RWPE1 (cell line): ENCODE measurements at regions of chr19 and their contacts with region 1.

Region 1: DNA sequence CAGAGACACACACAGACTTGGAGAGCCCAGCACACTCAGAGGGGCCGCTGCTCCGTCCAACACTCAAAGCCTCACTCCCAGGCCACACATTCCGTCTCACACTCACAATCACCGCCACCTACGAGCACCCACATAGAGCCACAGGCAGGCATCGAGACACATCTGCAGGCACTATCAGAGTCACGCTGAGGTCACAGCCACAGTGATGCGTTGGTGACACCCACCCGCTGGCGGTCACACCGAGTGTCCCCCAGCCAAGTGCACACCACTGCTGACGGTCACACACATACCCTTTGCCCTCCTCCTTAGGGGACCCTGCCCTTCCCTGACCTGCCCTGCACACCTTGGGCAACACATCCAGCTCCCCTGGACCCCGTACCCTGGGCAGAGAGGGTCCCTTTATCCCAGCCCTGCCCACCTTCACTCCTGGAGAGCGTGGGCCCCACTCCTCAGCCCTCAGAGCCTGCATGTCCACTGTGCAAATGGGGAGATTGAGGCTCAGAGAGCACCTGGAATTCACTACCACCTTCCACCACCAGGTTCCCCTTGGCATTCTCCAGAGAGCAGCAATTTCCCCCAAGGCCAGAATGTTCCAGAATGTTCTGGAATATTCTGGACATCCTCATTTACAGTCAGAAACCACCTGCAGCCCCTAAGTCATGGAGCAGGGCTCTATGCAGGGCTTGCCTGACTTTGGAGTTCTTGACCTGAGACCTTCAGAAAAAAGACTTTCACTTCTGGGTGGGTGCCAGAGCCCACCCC is 5.4 kb downstream of the FUT5 start:
- DNase-seq: no peak
- H3K27ac ChIP-seq: no peak overlapping the region
- CTCF ChIP-seq: no peak

Region 2: GRCh38 chr19:5897189-5897969 is 32.5 kb after region 1 on chr19:
- CTCF ChIA-PET with region 1: no interaction called
- POLR2A ChIA-PET with region 1: interaction called, 13 read pairs
- DNase-seq: no peak
- H3K27ac ChIP-seq: peak overlapping the region; percentile 84
- CTCF ChIP-seq: no peak